ENCODE measurements at regions of chr12 and their contacts with region 1.

Region 1: DNA sequence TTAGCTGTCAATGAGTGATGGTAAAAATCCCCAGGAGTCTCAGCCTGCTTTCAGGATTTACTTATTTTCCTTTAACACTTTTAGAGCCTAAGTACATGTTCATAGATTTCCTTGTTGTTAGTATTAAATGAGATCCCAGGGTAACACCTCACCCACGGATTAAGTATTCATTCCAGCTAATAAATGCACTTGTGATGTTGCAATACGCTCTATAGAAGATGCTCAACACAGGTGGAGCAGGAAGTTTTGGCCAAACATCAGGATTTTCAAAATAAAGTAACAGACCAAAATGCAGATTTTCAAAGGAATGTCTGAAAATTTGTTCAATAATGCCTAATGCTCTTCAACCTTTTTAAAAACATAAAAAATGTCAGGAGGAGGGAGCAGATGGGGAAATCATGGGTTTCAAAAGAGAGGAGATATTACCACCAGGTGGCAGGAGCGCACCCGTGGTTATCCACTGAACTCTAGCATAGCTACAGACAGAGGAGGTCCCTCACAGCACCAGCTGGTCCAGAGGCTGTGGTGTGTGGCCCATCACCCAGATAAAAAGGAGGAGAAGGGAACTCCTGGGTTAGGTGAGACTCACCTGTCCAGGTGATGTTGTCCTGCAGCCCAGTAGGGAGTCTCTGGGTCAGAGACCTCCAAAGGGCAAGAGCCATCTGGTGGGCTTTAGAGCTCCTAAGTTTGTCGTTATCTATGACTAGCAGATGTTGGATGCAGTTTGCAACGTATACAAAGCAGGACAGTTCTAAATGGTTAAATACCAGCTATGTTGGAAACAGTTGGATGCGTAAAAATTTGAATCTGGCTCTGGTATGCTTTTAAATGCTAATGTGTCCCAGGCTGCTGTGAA is 1158.4 kb upstream of the TMEM132C start:
- DNase-seq: peak; percentile 58
- ATAC-seq: no peak

Region 2: DNA sequence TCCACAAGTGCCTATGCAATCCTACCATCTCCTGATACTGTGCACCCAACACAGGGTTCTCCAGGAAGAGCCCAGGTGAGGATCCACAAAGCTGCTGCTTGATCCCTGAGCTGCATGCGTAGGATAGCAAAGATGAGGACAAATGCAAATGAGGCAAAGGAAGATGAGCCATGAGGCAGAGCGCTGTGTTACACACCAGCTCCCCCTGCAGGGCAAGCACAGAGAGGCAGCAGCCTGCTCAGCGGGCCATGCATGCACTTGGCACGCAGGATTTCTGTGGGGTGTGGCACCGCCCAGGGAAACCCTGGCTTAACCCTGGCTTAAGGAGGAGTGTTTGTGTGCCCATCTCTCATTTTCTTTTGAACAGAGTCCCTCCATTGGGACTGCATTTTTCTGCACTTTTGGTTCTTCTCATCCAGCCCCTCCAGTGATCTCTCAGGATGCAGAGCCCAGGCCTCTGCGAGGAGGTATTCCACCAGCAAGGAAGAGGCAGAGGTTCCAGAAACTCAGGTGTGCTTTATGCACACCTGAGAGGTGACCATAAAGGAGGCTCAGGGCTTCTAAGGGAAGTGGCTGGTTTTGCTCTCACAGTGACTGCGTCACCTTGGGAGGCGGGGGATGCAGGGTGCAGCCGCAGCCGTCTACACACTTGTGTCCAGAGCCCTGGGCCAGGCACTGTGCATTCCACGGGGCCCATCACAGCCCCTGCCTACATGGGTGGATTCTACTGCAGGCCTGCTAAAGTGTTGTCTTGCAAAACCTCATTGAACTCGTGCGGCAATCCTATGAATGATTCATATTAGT is 185.1 kb after region 1 on chr12:
- intact Hi-C with region 1: loop called (anchors 5 kb)
- DNase-seq: peak; percentile 71
- ATAC-seq: peak; percentile 48

Region 3: DNA sequence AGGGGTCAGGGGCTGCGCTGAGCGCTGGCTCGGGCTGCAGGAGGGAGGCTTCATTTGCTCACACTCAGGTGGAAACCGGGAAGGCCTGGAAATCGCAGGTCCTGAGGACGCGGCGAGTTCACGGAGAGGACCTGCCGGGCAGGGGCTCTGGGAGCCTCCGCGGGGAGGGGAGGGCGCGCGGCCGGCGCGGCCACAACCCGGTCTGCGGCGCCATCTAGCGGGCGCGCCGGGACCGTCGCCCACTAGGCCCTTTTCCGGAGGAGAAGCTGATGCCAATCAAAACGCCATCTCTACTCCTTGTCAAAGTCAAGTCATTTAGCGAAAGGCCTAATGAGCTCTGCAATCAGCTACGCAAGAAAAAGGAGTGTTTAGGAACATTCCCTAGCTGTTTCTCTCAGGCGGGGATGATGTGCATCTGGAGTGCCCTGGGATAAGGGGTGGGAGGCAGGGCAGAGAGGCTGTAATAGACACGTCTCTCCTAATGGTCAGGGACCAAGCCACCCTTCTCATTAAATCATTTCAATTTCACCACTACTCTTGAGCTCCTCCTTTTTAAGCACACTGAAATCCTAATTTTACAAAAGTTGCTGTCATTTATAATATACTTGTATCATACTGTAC is 272.6 kb after region 1 on chr12:
- intact Hi-C with region 1: loop called (anchors 2 kb)
- DNase-seq: no peak
- ATAC-seq: peak; percentile 62